ENCODE measurements at regions of chr7 and their contacts with region 1.

Region 1: DNA sequence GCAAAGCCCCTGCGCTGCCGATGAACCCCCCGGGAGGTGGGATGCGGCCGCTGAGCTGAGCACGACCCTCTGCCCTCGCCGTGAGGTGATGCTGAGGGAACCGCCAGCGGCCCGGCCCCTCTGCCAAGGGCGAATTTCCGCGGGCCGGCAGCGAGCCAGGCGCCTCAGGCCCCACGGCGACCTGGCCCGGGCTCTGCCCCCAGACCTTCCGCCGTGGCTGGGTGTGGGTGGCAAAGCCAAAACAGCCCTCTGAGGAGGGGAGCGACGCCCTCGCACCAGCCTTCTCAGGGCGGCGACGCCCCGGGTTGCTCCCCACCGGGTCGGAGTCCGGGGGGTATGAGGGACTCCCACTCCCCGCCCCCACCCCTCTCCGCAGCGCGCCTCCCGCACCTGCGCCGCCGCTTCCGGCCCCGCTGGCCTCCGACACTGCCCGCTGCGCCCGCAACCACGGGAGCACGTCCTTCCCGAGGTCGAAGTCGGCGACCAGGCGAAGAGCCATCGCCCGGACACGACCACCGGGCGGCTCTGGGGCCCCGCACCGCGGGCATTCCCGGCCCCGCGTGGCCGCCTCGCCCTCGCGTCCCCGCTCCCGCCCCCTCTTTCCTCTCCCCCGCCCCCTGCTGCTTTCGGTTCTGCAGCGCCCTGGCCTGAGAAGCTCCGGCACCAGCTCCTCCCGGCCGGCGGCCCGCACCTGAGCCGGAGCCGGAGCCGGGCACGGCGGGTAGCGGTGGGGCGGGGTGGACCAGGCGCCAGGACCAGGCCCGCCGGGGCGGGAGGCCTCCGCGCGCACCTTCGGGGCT is at the start of gene GSAP:
- DNase-seq: peak in 32 of 35 experiments; percentile 12 to 69 (median 40)
- ATAC-seq: peak; percentile 73 to 76 (median 76)
- H3K4me3 ChIP-seq: peak within 1 kb of the TSS; percentile 59 to 87
- H3K4me3 Mint-ChIP-seq: peak within 1 kb of the TSS; percentile 75 to 80 (median 76)
- H3K27ac ChIP-seq: peak within 1 kb of the TSS; percentile 58
- H3K27ac Mint-ChIP-seq: peak within 1 kb of the TSS; percentile 76
- H3K4me1 ChIP-seq: peaks cover 2 to 17% of the 10 kb centered on the region in 2 experiments
- H3K4me1 Mint-ChIP-seq: peaks cover 34 to 51% (median 44%) of the 10 kb centered on the region in 3 donors
- H3K27me3 ChIP-seq: no peaks in the 10 kb centered on the region
- H3K27me3 Mint-ChIP-seq: peaks cover 0 to 1% of the 10 kb centered on the region in 2 donors
- total RNA-seq, gene GSAP: 17.7 to 40.0 (median 25.7) TPM

Region 2: GRCh38 chr7:76997381-76997780 is 418.6 kb before region 1 on chr7:
- CTCF ChIA-PET with region 1: no interaction called
- POLR2A ChIA-PET with region 1: no interaction called
- DNase-seq: peak in 1 of 35 experiments; percentile 7
- ATAC-seq: peak in 2 of 4 experiments; percentile 13 to 15
- H3K4me3 ChIP-seq: no peak overlapping the region
- H3K4me3 Mint-ChIP-seq: no peak overlapping the region
- H3K27ac ChIP-seq: peak overlapping the region; percentile 11
- H3K27ac Mint-ChIP-seq: no peak overlapping the region
- H3K4me1 ChIP-seq: peaks cover 4 to 19% of the 10 kb centered on the region in 2 experiments
- H3K4me1 Mint-ChIP-seq: peaks cover 0 to 2% (median 0%) of the 10 kb centered on the region in 3 donors
- H3K27me3 ChIP-seq: no peaks in the 10 kb centered on the region
- H3K27me3 Mint-ChIP-seq: no peaks in the 10 kb centered on the region

Region 3: GRCh38 chr7:77351539-77352004 is 64.5 kb before region 1 on chr7:
- CTCF ChIA-PET with region 1: no interaction called
- POLR2A ChIA-PET with region 1: interaction called in 1 of 2 experiments, 11 read pairs
- DNase-seq: peak; percentile 25 to 81 (median 53)
- ATAC-seq: peak; percentile 80 to 89 (median 86)
- H3K4me3 ChIP-seq: peak overlapping the region in 1 of 2 donors; percentile 6
- H3K4me3 Mint-ChIP-seq: peak overlapping the region; percentile 58 to 81 (median 72)
- H3K27ac ChIP-seq: peak overlapping the region; percentile 63
- H3K27ac Mint-ChIP-seq: peak overlapping the region; percentile 92
- H3K4me1 ChIP-seq: peaks cover 52 to 60% of the 10 kb centered on the region in 2 experiments
- H3K4me1 Mint-ChIP-seq: peaks cover 68 to 78% (median 69%) of the 10 kb centered on the region in 3 donors
- H3K27me3 ChIP-seq: no peaks in the 10 kb centered on the region
- H3K27me3 Mint-ChIP-seq: no peaks in the 10 kb centered on the region

Region 4: DNA sequence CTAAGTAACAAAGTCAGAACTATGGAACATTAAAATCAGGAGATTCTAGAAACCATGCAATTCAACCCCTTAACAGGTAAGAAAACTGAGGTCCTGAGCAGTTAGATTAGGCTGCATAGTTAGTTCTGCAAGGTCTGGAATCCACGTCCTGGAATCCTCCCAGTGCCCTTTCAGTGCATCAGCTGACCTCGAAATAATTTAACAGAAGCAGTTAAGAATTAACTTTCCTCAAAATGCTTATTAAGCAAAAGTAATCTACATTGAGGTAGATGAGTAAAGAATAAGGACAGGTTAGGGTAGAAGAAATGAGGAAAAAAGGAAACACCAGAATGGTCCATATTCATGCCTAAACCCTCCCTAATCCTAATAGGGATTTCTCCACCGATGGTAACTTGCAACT is 37.4 kb before region 1 on chr7:
- CTCF ChIA-PET with region 1: no interaction called
- POLR2A ChIA-PET with region 1: no interaction called
- DNase-seq: no peak
- ATAC-seq: no peak
- H3K4me3 ChIP-seq: no peak overlapping the region
- H3K4me3 Mint-ChIP-seq: no peak overlapping the region
- H3K27ac ChIP-seq: no peak overlapping the region
- H3K27ac Mint-ChIP-seq: no peak overlapping the region
- H3K4me1 ChIP-seq: no peaks in the 10 kb centered on the region
- H3K4me1 Mint-ChIP-seq: no peaks in the 10 kb centered on the region
- H3K27me3 ChIP-seq: no peaks in the 10 kb centered on the region
- H3K27me3 Mint-ChIP-seq: no peaks in the 10 kb centered on the region

Region 5: DNA sequence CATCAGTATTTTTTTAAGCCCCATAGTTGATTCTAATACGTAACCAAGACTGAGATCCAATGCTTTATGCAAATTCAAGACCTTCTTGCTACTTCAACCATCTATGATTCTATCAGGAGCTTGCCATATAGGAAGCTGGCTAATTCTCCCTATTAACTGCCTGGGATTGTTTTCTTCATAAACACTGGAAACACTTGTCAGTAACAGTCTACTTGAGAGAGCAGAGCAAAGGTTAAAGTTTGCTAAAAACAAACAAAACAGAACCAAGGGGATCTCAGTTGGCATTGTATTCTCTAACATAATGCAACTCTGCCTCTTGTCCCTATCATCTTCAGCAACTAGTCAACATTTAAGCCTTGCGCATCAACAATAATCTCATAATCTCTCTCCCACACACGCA is 100.1 kb after region 1 on chr7:
- CTCF ChIA-PET with region 1: no interaction called
- POLR2A ChIA-PET with region 1: no interaction called
- DNase-seq: no peak
- ATAC-seq: no peak
- H3K4me3 ChIP-seq: no peak overlapping the region
- H3K4me3 Mint-ChIP-seq: no peak overlapping the region
- H3K27ac ChIP-seq: no peak overlapping the region
- H3K27ac Mint-ChIP-seq: no peak overlapping the region
- H3K4me1 ChIP-seq: no peaks in the 10 kb centered on the region
- H3K4me1 Mint-ChIP-seq: no peaks in the 10 kb centered on the region
- H3K27me3 ChIP-seq: no peaks in the 10 kb centered on the region
- H3K27me3 Mint-ChIP-seq: no peaks in the 10 kb centered on the region

Measured in T-cell (primary cell).